ENCODE measurements at regions of chr19 and their contacts with region 1.

Region 1: GRCh38 chr19:56403764-56404704 is at the start of gene ZNF583:
- DNase-seq: peak; percentile 94
- H3K4me3 ChIP-seq: peak within 1 kb of the TSS; percentile 75
- H3K27ac ChIP-seq: peak within 1 kb of the TSS; percentile 91
- H3K4me1 ChIP-seq: no peaks in the 10 kb centered on the region
- H3K27me3 ChIP-seq: no peaks in the 10 kb centered on the region
- CTCF ChIP-seq: no peak
- total RNA-seq, gene ZNF583: 1.3 to 2.1 TPM

Region 2: DNA sequence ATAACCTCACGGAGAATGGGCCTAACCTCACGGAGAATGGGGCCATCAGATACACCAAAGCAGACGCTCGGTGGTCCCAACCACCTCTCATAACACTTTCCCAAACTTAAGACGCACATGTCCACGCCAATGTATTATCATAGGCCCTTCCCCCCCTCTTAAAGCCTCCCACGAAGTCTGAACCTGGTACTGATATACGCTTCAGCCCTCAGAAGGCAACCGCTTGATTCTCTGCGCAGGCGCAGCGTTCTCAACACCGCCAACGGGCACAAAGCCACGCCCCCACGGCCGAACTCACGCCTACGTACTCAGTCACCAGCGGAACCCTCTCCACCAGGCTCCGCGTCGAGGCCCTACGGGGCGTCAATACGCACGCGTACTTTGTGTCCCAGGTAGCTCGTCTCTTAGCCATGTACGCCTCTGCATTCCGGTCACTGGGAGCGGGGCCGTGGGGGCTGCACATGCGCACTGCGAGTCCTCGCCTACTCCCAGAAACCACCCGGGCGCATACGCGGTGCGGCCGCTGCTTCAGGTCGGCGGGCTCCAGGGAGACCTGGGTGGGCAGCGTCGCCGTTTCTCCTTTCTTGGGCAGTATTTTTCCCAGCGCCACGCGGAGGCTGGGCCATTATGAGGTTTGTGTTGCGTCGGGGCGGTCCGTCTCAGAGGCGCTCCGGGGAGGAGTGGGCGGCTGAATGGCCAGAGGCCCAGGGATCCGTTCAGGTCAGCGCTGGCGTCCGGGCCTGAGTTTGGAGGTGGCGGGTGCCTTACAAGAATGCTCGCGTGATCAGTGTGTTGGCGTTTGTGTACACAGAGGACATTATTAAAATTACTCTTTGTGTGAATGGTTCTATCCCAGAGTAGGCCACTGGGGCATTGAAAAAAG is 36.0 kb before region 1 on chr19:
- intact Hi-C with region 1: no loop called
- DNase-seq: peak; percentile 89
- H3K4me3 ChIP-seq: peak overlapping the region; percentile 48
- H3K27ac ChIP-seq: peak overlapping the region; percentile 58
- H3K4me1 ChIP-seq: no peaks in the 10 kb centered on the region
- H3K27me3 ChIP-seq: no peaks in the 10 kb centered on the region
- CTCF ChIP-seq: no peak

Region 3: DNA sequence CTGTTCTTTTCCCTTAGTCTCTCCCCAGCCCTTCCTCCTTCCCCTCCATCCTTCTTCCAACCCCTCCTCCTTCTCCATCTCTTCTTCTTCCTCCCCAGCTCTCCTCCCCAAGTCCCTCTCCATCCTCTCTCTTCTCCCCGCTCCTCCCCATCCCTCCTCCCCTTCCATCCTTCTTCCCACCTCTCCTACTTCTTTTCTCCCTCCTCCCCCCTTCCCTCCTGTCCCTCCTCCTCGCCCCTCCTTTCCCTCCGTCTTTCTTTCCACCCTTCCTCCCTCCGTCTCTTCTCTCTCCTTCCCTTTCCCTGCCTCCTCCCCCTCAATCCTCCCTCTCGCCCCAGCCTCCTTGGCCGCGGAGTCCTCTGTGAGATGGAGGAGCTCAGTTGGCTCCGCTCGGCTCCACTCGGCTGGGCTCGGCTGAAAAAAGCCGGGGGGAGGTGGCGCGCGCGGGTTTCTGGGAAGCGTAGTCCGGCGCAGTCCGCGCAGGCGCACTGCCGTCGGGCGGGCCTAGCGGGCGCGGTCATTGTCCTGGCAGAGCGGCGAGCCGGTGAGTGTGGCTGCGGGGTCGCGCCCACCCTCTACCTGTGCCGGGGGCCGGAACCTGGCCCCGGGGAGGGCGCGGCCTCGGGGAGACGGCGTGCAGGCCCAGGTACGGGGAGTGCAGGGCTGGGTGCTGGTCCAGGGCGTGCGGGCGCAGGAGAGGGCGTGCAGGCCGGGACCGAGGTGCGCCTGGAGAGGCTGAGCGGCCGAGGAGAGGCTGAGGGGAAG is 190.9 kb after region 1 on chr19 and contains the start of gene ZNF71:
- intact Hi-C with region 1: loop called (anchors 10 kb)
- DNase-seq: peak; percentile 86
- H3K4me3 ChIP-seq: peak within 1 kb of the TSS; percentile 94
- H3K27ac ChIP-seq: peak within 1 kb of the TSS; percentile 12
- H3K4me1 ChIP-seq: no peaks in the 10 kb centered on the region
- H3K27me3 ChIP-seq: no peaks in the 10 kb centered on the region
- CTCF ChIP-seq: no peak
- total RNA-seq, gene ZNF71: 2.6 to 3.9 TPM